A549 (cell line): ENCODE measurements at regions of chr12 and their contacts with region 1.

Region 1: DNA sequence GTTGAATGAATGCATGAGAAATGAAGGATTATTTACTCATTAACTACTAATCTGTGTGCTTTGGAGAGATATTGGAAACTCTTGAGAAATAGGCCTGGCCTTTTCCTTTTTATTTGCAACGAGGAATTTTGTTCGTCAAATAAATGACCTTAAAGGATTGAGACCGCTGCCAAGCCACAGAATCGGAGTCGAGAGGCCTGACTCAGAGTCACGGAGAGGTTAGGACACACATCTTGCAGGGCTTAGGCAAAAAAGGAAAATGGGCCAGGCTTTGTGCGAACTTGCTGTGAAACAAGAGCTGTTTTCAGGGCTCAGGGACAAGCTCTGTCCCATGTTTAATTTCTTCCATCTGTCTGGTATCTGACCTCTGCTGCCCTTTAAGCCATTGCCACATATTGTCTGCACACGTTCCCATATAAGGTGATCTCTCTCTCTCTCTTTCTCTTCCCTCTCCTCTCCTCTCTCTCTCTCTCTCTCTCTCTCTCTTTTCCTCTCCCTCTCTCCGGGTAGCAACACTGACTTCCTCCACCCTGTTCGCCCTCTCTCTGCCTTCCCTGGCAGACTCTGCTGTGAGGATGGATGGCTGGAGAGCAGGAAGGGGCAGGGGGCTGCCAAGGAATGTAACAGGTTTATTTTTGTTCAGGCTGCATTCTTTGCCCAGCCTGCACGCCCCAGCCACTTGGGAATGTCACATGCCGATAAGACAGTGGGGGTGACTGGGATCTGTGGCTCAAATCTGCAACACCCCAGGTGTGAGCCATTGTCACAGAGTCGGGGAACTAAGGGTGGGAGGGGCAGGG is 14.9 kb upstream of the IFT81 start:
- DNase-seq: peak; percentile 77 to 100
- ATAC-seq: peak; percentile 83
- H3K4me3 ChIP-seq: peak overlapping the region; percentile 4; the same call in 1 of the 3 replicates
- H3K27ac ChIP-seq: peak overlapping the region; percentile 95 to 96
- H3K4me1 ChIP-seq: peaks cover 55% of the 10 kb centered on the region
- CTCF ChIP-seq: no peak
- EP300 ChIP-seq: peak; percentile 98 to 99
- POLR2A ChIP-seq: no peak
- RAD21 ChIP-seq: peak; percentile 12 to 48; a peak in 4 of 5 replicates

Region 2: GRCh38 chr12:110124184-110124995 is 15.2 kb after region 1 on chr12 and contains the start of gene IFT81:
- CTCF ChIA-PET with region 1: interaction called, 9 read pairs
- POLR2A ChIA-PET with region 1: interaction called, 26 read pairs
- DNase-seq: peak; percentile 90 to 96
- ATAC-seq: peak; percentile 87 to 88
- H3K4me3 ChIP-seq: peak within 1 kb of the TSS; percentile 96
- H3K27ac ChIP-seq: peak within 1 kb of the TSS; percentile 94 to 99
- H3K4me1 ChIP-seq: peaks cover 38% of the 10 kb centered on the region
- CTCF ChIP-seq: no peak
- EP300 ChIP-seq: no peak
- POLR2A ChIP-seq: no peak; the same call in none of the 2 replicates
- RAD21 ChIP-seq: no peak; a peak in 2 of 5 replicates
- polyA plus RNA-seq, gene IFT81: 39.7 and 73.4 TPM in 2 replicates

Region 3: DNA sequence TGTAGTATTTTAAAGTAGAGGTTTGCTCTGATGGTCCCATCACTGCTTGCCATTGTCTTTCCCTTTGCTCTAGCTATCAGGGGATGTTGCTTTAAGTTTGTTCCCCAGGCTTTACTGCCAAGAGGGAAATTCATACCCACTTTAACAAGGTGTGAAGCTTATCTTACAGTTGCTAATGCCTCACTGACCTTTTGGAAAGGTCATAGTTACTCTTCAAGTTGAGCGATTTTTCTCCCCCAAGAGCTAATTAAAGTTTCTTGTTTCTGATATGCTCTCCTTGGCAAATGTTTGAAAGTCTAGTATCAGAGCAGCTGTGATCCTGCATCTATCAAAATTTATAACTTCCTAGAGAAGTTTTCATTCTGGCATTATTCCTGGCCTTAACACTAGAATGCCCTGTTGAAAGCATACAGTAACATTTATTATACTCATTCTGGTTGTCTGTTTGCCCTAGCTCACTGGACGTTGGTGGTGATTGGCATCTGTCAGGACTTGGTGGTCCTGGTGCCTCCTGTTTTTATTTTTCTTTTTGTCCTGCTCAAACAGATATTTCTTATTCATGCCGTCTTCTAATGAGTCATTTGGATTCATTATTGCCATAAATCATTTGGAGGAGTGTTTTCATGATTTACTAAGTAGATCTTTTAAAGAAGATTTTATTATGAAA is 179.9 kb after region 1 on chr12:
- CTCF ChIA-PET with region 1: no interaction called
- POLR2A ChIA-PET with region 1: no interaction called
- DNase-seq: no peak
- ATAC-seq: peak; percentile 16 to 19; a peak in 2 of 6 replicates
- H3K4me3 ChIP-seq: no peak overlapping the region
- H3K27ac ChIP-seq: peak overlapping the region in 1 of 2 experiments; percentile 58; a peak in 4 of 6 replicates
- H3K4me1 ChIP-seq: peaks cover 55% of the 10 kb centered on the region
- CTCF ChIP-seq: no peak
- EP300 ChIP-seq: no peak
- POLR2A ChIP-seq: no peak
- RAD21 ChIP-seq: no peak